Activated CD8-positive, alpha-beta T cell treated with anti-CD3 and anti-CD28 coated beads for 36 hours (primary cell): ENCODE measurements at regions of chr19 and their contacts with region 1.

Region 1: GRCh38 chr19:29714953-29715700 is at the start of gene C19orf12:
- DNase-seq: peak; percentile 75
- ATAC-seq: peak; percentile 62
- H3K4me3 Mint-ChIP-seq: peak within 1 kb of the TSS; percentile 97
- H3K27ac Mint-ChIP-seq: peak within 1 kb of the TSS; percentile 98
- H3K4me1 Mint-ChIP-seq: peaks cover 46% of the 10 kb centered on the region
- H3K27me3 Mint-ChIP-seq: no peaks in the 10 kb centered on the region
- CTCF ChIP-seq: no peak
- total RNA-seq, gene C19orf12: 33.3 to 36.6 TPM

Region 2: DNA sequence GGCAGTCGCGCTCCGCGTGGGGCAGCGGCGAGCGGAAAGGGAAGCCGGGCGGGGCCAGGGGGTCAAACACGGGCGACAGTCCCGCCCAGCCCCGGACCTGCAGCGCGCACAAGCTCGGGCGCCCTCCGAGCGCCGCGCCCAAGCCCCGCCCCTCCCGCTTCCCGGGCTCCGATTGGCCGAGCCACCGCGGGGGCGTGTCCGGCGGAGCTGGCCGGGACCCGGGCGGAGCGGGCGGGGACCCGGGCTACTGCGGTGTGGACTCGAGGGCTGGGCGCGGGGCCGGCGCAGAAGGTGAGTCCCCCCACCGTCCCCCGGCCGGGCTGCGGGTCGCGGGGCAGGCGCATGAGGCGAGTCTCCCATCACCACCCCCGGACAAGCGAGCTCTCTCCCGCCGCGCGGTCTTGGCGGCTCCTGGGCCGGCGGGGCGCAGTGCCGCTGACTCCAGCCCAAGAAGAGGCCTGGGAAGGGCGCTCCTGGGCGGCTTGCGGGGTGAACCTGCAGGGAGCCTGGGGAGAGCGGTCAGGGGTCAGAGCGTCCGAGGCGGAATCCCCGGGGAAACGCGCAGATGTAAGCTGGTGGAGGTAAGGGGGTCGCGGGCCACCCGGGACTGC is 49.8 kb before region 1 on chr19 and contains the start of gene PLEKHF1:
- CTCF ChIA-PET with region 1: interaction called, 25 read pairs
- POLR2A ChIA-PET with region 1: interaction called, 12 read pairs
- intact Hi-C with region 1: no loop called
- DNase-seq: peak; percentile 87
- ATAC-seq: peak; percentile 79
- H3K4me3 Mint-ChIP-seq: peak within 1 kb of the TSS; percentile 88
- H3K27ac Mint-ChIP-seq: peak within 1 kb of the TSS; percentile 90
- H3K4me1 Mint-ChIP-seq: peaks cover 66% of the 10 kb centered on the region
- H3K27me3 Mint-ChIP-seq: no peaks in the 10 kb centered on the region
- CTCF ChIP-seq: no peak
- total RNA-seq, gene PLEKHF1: 30.4 to 31.7 TPM

Region 3: DNA sequence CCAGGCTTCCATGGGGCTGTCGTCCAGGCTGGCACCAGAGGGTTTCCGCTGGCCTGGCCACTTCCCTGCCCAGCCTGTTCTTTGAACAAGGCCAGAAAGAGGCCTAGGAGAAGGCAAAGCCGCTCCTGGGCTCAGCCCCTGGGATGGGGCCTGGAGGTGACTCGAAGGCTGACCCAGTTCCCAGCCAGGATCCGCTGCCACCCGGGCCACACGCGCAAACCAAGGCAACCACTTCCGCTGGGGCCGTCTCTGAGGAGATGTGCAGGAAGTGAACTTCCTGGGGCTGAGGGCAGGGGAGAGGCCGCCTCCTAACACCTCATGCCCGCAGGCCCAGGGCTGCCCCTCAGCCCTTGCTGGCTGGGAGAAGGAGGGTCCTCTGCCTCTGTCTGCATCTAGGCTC is 34.7 kb before region 1 on chr19:
- CTCF ChIA-PET with region 1: interaction called, 15 read pairs
- POLR2A ChIA-PET with region 1: interaction called, 7 read pairs
- intact Hi-C with region 1: no loop called
- DNase-seq: peak; percentile 92
- ATAC-seq: peak; percentile 90
- H3K4me3 Mint-ChIP-seq: peak overlapping the region; percentile 52
- H3K27ac Mint-ChIP-seq: peak overlapping the region; percentile 83
- H3K4me1 Mint-ChIP-seq: peaks cover 72% of the 10 kb centered on the region
- H3K27me3 Mint-ChIP-seq: no peaks in the 10 kb centered on the region
- CTCF ChIP-seq: no peak

Region 4: DNA sequence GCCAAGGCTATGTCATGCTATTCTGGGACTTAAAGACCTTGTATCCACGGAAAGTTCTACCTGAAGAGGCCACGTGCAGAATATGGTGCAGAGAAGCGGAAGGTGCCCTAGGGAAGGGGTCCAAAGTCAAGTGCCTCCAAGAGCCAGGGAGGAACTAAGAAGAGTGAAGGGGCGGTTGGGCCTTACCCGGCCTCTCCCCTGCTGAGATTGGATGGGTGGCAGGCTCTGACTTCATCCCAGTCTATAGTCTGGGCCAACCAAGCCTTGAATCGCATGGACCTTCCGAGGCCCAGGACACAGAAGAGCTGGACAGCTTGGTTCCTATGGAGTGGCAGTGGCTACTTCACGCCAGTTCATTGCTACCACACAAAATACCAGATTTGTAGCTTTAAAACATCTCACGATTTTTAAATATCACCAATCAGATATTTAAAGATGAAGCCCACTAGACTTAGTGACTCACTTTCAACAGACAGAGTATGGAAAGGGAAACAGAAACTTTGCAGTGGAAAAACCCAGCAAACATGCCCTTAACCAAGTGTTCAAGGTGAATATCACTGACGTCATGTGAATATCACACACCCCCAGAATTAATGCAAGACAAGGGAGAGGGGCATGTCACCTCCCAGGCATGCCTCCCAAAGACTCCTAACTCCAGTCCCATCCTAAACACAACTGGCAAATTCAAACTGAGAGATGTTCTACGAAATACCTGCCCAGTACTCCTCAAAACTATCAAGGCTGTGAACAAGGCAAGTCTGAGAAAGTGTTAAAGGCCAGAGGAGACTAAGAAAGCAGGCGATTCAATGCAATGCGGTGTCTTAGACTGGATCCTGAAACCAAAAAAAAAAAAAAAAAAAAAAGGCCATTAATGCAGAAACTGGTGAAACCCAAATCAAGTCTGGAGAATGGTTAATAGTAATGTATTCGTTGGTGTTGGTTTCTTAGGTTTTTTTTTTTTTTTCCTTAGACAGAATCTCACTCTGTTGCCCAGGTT is 10.3 kb before region 1 on chr19:
- CTCF ChIA-PET with region 1: interaction called, 38 read pairs
- POLR2A ChIA-PET with region 1: interaction called, 49 read pairs
- intact Hi-C with region 1: no loop called
- DNase-seq: peak; percentile 66
- ATAC-seq: peak; percentile 81
- H3K4me3 Mint-ChIP-seq: peak overlapping the region; percentile 47
- H3K27ac Mint-ChIP-seq: peak overlapping the region; percentile 99
- H3K4me1 Mint-ChIP-seq: peaks cover 59% of the 10 kb centered on the region
- H3K27me3 Mint-ChIP-seq: no peaks in the 10 kb centered on the region
- CTCF ChIP-seq: no peak

Region 5: DNA sequence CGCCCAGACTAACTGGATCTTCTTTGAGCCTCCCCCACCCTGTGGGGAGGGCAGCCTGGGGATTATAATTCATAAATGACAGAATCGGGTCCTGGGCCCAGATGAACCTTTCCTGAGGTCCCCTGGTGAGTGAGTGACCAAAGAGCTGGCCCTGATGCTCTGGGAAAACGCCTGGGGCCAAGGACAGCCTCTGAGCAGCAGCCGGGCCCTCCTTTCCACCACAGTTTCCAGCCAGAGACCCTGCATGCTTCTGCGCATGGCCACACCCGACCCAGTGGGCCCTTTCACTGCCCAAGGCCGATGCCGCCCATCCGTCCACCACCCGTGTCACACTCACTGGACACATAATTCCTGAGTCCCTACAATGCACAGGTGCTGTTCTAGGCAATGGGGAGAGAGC is 53.0 kb after region 1 on chr19:
- CTCF ChIA-PET with region 1: no interaction called
- POLR2A ChIA-PET with region 1: no interaction called
- intact Hi-C with region 1: no loop called
- DNase-seq: no peak
- ATAC-seq: no peak
- H3K4me3 Mint-ChIP-seq: no peak overlapping the region
- H3K27ac Mint-ChIP-seq: no peak overlapping the region
- H3K4me1 Mint-ChIP-seq: no peaks in the 10 kb centered on the region
- H3K27me3 Mint-ChIP-seq: peaks cover 1% of the 10 kb centered on the region
- CTCF ChIP-seq: no peak